Activated CD4-positive, alpha-beta memory T cell treated with anti-CD3 and anti-CD28 coated beads for 36 hours (primary cell): ENCODE measurements at regions of chr18 and their contacts with region 1.

Region 1: DNA sequence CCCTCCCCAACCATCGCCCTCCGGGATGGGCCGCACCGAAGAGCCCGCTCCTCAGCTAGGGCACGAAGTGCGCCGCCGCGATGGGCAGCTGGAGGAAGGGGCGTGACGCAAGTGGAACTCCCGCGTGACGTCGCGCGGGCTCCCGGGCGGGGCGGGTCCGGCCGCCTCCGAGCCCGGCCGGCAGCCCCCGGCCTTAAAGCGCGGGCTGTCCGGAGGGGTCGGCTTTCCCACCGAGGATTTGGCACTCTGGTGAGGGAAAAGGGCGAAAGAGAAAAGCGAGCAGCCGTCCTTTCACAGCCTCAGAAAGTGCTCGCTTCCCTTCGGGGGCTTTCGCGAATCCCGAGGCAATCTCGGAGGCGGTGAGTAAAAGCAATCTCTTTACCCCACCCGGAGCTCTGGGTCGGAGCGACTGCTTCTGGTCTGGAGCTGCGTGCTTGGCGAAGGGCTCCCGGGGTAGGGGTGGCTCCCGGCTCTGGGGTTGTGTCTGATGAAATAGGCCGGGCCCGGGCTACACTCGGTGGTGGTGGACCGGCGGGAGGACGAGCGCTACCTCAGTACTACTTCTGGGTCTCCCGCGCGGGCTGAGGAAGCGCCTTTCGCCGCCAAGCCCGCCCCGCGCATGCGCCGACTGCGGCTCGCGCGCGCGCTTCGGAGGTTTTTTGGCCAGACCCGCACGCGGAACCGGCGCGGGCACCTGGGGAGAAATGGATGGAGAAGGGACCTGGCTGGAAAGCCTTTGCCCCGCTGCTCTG is at the start of gene RBBP8:
- DNase-seq: peak; percentile 85
- H3K4me3 Mint-ChIP-seq: peak within 1 kb of the TSS; percentile 88
- H3K27ac Mint-ChIP-seq: peak within 1 kb of the TSS; percentile 93
- H3K4me1 Mint-ChIP-seq: peaks cover 18% of the 10 kb centered on the region
- H3K27me3 Mint-ChIP-seq: no peaks in the 10 kb centered on the region
- total RNA-seq, gene RBBP8: 62.5 to 65.3 TPM

Region 2: DNA sequence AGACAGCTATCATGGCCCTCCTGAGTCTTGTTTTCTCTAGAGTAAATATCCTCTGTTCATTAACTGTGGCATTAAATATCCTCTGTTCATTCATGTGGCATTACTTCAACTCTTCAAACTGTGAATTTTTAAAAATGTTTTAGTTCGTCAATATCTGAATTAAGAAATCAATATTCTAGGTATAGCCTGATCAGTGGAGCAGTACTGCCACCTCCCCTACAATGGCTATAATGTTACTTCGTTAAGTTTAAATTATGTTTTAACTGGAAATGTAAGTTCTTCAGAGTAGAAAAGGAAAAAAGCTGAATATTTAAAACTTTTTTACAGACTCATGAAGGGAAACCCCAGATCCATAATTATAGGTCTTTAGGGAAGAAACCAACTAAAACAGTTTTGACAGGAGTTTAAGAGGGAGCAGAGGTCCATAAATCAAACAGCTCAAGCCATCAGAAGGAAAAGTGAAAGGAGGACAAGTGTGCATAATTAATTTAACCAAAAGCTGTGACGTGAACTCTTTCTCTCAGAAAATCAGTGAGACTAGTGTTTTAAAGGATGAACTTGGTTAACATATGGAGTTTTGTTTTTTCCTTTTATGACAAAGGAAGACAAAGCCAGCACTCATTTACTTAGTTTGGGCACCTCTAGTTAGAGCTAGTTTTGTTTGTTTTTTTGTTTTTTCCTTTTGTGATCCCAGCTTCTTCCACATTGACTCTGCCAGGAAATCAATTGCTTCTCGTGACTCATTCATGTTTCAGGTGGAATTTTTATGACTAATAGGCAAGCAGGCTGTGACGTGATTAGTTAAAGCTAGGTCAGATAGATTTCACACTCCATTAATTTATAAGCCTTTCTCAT is 44.7 kb after region 1 on chr18:
- CTCF ChIA-PET with region 1: interaction called, 45 read pairs
- POLR2A ChIA-PET with region 1: interaction called, 3 read pairs
- intact Hi-C with region 1: loop called (anchors 1 kb)
- DNase-seq: no peak
- H3K4me3 Mint-ChIP-seq: peak overlapping the region; percentile 30
- H3K27ac Mint-ChIP-seq: peak overlapping the region; percentile 89
- H3K4me1 Mint-ChIP-seq: peaks cover 19% of the 10 kb centered on the region
- H3K27me3 Mint-ChIP-seq: no peaks in the 10 kb centered on the region

Region 3: GRCh38 chr18:22999212-22999611 is 65.8 kb after region 1 on chr18:
- CTCF ChIA-PET with region 1: no interaction called
- POLR2A ChIA-PET with region 1: no interaction called
- intact Hi-C with region 1: no loop called
- DNase-seq: no peak
- H3K4me3 Mint-ChIP-seq: no peak overlapping the region
- H3K27ac Mint-ChIP-seq: no peak overlapping the region
- H3K4me1 Mint-ChIP-seq: no peaks in the 10 kb centered on the region
- H3K27me3 Mint-ChIP-seq: no peaks in the 10 kb centered on the region

Region 4: GRCh38 chr18:23071285-23071684 is 137.9 kb after region 1 on chr18:
- CTCF ChIA-PET with region 1: no interaction called
- POLR2A ChIA-PET with region 1: no interaction called
- intact Hi-C with region 1: loop called (anchors 1 kb)
- DNase-seq: peak; percentile 87
- H3K4me3 Mint-ChIP-seq: peak overlapping the region; percentile 28
- H3K27ac Mint-ChIP-seq: peak overlapping the region; percentile 79
- H3K4me1 Mint-ChIP-seq: peaks cover 46% of the 10 kb centered on the region
- H3K27me3 Mint-ChIP-seq: no peaks in the 10 kb centered on the region

Region 5: GRCh38 chr18:23377669-23378301 is 444.4 kb after region 1 on chr18:
- CTCF ChIA-PET with region 1: no interaction called
- POLR2A ChIA-PET with region 1: no interaction called
- intact Hi-C with region 1: loop called (anchors 5 kb)
- DNase-seq: no peak
- H3K4me3 Mint-ChIP-seq: no peak overlapping the region
- H3K27ac Mint-ChIP-seq: peak overlapping the region; percentile 28
- H3K4me1 Mint-ChIP-seq: peaks cover 13% of the 10 kb centered on the region
- H3K27me3 Mint-ChIP-seq: no peaks in the 10 kb centered on the region

Region 6: DNA sequence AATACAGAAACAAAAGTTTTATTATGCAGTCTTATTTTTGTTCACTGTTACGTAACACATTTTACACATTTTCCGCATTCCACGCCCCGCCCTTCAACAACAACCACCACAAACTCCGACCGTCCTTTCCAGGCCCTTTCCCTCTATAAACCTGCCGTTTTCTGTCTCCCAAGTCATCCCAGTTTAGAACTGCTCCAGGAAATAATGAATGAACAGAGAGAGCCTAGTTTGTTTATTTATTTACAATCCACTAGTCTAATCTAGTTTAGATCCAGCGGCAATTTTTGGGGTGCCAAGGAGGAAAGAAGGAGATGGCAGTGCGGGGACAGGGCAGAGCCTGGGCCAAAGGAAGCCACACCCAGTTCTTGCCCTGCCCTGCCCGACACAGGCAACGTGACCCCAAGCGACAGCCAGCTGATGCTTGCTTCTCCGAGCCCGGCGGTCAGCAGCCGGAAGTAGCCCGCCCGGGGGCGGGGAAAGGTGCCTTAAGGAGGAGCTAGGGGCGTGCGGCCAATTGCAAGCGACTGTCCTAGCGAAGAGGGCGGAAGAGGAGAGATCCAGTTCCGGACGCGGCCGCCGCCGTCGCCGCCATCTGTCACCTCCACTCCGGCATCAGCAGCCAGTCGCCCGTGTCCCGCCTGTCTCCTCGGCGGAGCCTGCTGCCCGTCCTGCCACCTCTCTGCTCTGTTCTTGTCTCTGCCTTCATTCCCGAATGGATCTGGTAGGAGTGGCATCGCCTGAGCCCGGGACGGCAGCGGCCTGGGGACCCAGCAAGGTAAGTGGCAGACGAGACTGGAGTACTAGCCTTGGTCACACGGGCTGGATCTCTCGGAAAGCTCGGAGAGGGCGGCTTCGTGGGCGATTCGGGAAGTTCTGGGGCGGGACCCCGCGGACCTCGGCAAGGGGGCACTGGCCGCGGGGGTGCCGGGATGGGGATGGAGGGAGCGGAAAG is 519.6 kb after region 1 on chr18 and contains the start of gene RIOK3:
- CTCF ChIA-PET with region 1: no interaction called
- POLR2A ChIA-PET with region 1: no interaction called
- intact Hi-C with region 1: loop called (anchors 1 kb)
- DNase-seq: peak; percentile 97
- H3K4me3 Mint-ChIP-seq: peak within 1 kb of the TSS; percentile 98
- H3K27ac Mint-ChIP-seq: peak within 1 kb of the TSS; percentile 88
- H3K4me1 Mint-ChIP-seq: peaks cover 39% of the 10 kb centered on the region
- H3K27me3 Mint-ChIP-seq: peaks cover 2% of the 10 kb centered on the region
- total RNA-seq, gene RIOK3: 51.0 to 55.8 TPM